Naive thymus-derived CD4-positive, alpha-beta T cell (primary cell): ENCODE measurements at regions of chr1 and their contacts with region 1.

Region 1: DNA sequence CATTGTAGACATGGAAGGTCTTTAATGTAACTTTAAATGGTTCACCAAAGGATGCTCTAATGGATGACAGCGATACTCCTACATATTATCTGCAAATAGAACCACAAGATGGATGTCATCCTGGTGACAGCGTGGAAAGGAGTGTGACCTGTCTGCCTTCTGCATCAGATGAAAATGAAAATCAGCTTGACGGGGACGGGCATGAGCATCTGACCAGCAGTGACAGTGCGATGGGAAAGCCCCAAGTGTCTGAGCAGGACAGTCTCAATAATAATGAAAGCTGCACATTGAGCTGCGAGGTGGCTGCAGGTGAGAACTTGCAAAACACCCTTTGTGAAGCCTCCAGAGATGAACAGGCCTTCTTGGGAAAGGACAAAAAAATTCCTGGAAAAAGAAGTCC is 25.2 kb downstream of the CNST start:
- DNase-seq: no peak
- ATAC-seq: no peak
- H3K4me3 ChIP-seq: no peak overlapping the region
- H3K4me3 Mint-ChIP-seq: peak overlapping the region in 4 of 10 donors; percentile 9 to 56 (median 48)
- H3K27ac ChIP-seq: no peak overlapping the region
- H3K27ac Mint-ChIP-seq: peak overlapping the region in 2 of 9 donors; percentile 27 to 59
- H3K4me1 ChIP-seq: peaks cover 0 to 12% of the 10 kb centered on the region in 2 donors
- H3K4me1 Mint-ChIP-seq: peaks cover 18 to 76% (median 67%) of the 10 kb centered on the region in 7 donors
- H3K27me3 ChIP-seq: no peaks in the 10 kb centered on the region
- H3K27me3 Mint-ChIP-seq: no peaks in the 10 kb centered on the region

Region 2: DNA sequence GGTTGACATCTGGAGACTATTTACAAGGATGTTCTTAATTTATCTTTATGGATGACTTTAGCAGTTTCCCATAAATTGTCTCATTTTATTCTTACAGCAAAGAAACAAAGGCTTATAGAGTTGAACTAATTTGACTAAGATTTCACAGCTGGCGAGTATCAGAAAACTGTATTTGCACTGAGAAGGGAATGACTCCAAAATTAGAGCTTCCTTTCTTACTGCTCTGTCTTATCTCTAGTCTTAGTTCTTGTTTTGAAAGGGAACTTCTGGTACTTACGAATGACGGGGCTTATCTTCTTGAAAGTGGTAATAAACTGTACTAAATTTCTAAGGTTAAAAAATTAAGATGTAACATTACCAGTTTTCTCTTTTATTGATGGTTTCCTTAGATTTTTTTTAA is 11.7 kb before region 1 on chr1:
- CTCF ChIA-PET with region 1: interaction called, 3 read pairs
- POLR2A ChIA-PET with region 1: interaction called, 5 read pairs
- intact Hi-C with region 1: loop called in 1 of 2 experiments (anchors 1 kb)
- DNase-seq: no peak
- ATAC-seq: peak; percentile 42
- H3K4me3 ChIP-seq: no peak overlapping the region
- H3K4me3 Mint-ChIP-seq: peak overlapping the region in 9 of 10 donors; percentile 30 to 87 (median 55)
- H3K27ac ChIP-seq: peak overlapping the region; percentile 15
- H3K27ac Mint-ChIP-seq: peak overlapping the region in 5 of 9 donors; percentile 0 to 62 (median 51)
- H3K4me1 ChIP-seq: peaks cover 0 to 55% of the 10 kb centered on the region in 2 donors
- H3K4me1 Mint-ChIP-seq: peaks cover 47 to 98% (median 91%) of the 10 kb centered on the region in 7 donors
- H3K27me3 ChIP-seq: no peaks in the 10 kb centered on the region
- H3K27me3 Mint-ChIP-seq: no peaks in the 10 kb centered on the region